Endothelial cell of umbilical vein (primary cell): ENCODE measurements at regions of chr5 and their contacts with region 1.

Region 1: GRCh38 chr5:95620030-95620869 is at the start of gene GPR150:
- DNase-seq: peak; percentile 39
- H3K4me3 ChIP-seq: peak within 1 kb of the TSS; percentile 18 to 54 (median 53)
- H3K27ac ChIP-seq: peak within 1 kb of the TSS; percentile 44
- H3K4me1 ChIP-seq: peaks cover 23% of the 10 kb centered on the region
- H3K27me3 ChIP-seq: no peaks in the 10 kb centered on the region
- CTCF ChIP-seq: no peak
- POLR2A ChIP-seq: peak; percentile 31
- total RNA-seq, gene GPR150: 0.31 and 0.35 TPM in 2 replicates

Region 2: GRCh38 chr5:95565280-95565920 is 54.9 kb before region 1 on chr5:
- CTCF ChIA-PET with region 1: no interaction called
- POLR2A ChIA-PET with region 1: no interaction called
- dilution Hi-C with region 1: no loop called
- intact Hi-C with region 1: no loop called
- DNase-seq: no peak
- H3K4me3 ChIP-seq: no peak overlapping the region
- H3K27ac ChIP-seq: no peak overlapping the region
- H3K4me1 ChIP-seq: peaks cover 5% of the 10 kb centered on the region
- H3K27me3 ChIP-seq: no peaks in the 10 kb centered on the region
- CTCF ChIP-seq: no peak
- POLR2A ChIP-seq: no peak

Region 3: GRCh38 chr5:95631991-95632675 is 11.9 kb after region 1 on chr5:
- CTCF ChIA-PET with region 1: interaction called, 10 read pairs
- POLR2A ChIA-PET with region 1: no interaction called
- dilution Hi-C with region 1: no loop called
- intact Hi-C with region 1: loop called (anchors 1 kb)
- DNase-seq: peak; percentile 68
- H3K4me3 ChIP-seq: no peak overlapping the region
- H3K27ac ChIP-seq: peak overlapping the region; percentile 44
- H3K4me1 ChIP-seq: peaks cover 9% of the 10 kb centered on the region
- H3K27me3 ChIP-seq: no peaks in the 10 kb centered on the region
- CTCF ChIP-seq: no peak
- POLR2A ChIP-seq: no peak